ENCODE measurements at regions of chr10 and their contacts with region 1.

Region 1: GRCh38 chr10:6151087-6151977 is 51.4 kb upstream of the PFKFB3 start:
- DNase-seq: peak; percentile 84
- ATAC-seq: peak; percentile 84
- H3K4me3 ChIP-seq: peak overlapping the region; percentile 6 to 58 (median 26)
- H3K4me3 Mint-ChIP-seq: peak overlapping the region; percentile 85
- H3K27ac ChIP-seq: peak overlapping the region; percentile 40 to 78
- H3K27ac Mint-ChIP-seq: peak overlapping the region; percentile 87
- H3K4me1 ChIP-seq: peaks cover 24 to 34% of the 10 kb centered on the region in 2 donors
- H3K4me1 Mint-ChIP-seq: peaks cover 53% of the 10 kb centered on the region
- H3K27me3 ChIP-seq: no peaks in the 10 kb centered on the region
- H3K27me3 Mint-ChIP-seq: no peaks in the 10 kb centered on the region
- CTCF ChIP-seq: peak; percentile 71

Region 2: GRCh38 chr10:6074489-6075301 is 76.6 kb before region 1 on chr10:
- CTCF ChIA-PET with region 1: no interaction called
- POLR2A ChIA-PET with region 1: interaction called, 11 read pairs
- intact Hi-C with region 1: no loop called
- DNase-seq: no peak
- ATAC-seq: no peak
- H3K4me3 ChIP-seq: no peak overlapping the region
- H3K4me3 Mint-ChIP-seq: no peak overlapping the region
- H3K27ac ChIP-seq: no peak overlapping the region
- H3K27ac Mint-ChIP-seq: peak overlapping the region; percentile 61
- H3K4me1 ChIP-seq: peaks cover 35 to 38% of the 10 kb centered on the region in 2 donors
- H3K4me1 Mint-ChIP-seq: peaks cover 46% of the 10 kb centered on the region
- H3K27me3 ChIP-seq: no peaks in the 10 kb centered on the region
- H3K27me3 Mint-ChIP-seq: no peaks in the 10 kb centered on the region
- CTCF ChIP-seq: no peak

Region 3: GRCh38 chr10:6108603-6109443 is 42.5 kb before region 1 on chr10:
- CTCF ChIA-PET with region 1: interaction called, 33 read pairs
- POLR2A ChIA-PET with region 1: no interaction called
- intact Hi-C with region 1: loop called (anchors 1 kb)
- DNase-seq: peak; percentile 72
- ATAC-seq: peak; percentile 80
- H3K4me3 ChIP-seq: no peak overlapping the region
- H3K4me3 Mint-ChIP-seq: no peak overlapping the region
- H3K27ac ChIP-seq: no peak overlapping the region
- H3K27ac Mint-ChIP-seq: no peak overlapping the region
- H3K4me1 ChIP-seq: peaks cover 7 to 9% of the 10 kb centered on the region in 2 donors
- H3K4me1 Mint-ChIP-seq: peaks cover 12% of the 10 kb centered on the region
- H3K27me3 ChIP-seq: no peaks in the 10 kb centered on the region
- H3K27me3 Mint-ChIP-seq: no peaks in the 10 kb centered on the region
- CTCF ChIP-seq: peak; percentile 87

Region 4: DNA sequence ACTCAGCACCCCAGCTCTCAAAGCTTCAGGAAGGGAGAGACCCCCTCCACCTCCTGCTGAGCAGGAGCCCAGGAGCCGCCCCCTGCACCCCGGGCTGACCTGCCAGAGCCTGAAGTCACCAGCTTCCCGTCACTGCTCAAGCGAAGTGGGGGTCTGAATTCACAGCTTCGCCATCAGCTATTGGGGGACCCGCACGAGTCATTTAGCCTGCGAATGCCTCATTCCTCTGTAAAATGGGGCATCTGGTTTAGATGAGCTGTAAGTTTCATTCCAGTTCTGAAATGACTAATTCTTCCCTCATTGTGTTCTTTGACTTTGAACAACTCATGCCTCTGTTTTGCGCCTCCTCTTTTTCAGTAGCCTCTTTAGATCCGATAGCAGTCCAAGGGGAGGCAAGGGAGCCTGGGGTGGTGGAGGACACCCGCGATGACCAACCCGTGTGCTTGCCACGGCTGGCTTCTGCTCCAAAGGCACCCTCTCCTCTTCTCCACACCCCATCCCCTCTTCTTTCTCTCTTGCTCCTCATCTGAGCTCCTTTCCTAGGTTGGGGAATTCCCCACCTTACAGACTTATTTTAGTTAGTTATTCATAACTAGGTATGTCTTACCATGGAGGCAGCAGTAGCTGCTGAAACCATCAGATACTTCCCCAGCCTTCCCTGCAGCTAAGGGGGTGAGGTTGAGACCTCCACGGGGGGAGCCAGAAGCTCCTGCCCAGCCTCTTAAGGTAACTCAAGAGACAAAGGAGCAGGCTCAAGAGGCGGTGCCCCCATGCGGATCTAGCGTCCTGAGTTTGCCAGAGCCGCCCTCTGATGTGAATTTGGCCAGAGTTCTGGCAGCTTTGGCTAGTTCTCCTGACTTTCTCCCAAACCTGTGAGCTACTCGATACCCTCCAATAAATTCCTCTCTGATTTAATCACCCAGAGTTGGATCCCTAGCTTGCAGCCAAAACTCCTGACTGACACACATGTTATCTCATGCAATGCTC is 14.8 kb before region 1 on chr10:
- CTCF ChIA-PET with region 1: interaction called, 27 read pairs
- POLR2A ChIA-PET with region 1: no interaction called
- intact Hi-C with region 1: no loop called
- DNase-seq: no peak
- ATAC-seq: no peak
- H3K4me3 ChIP-seq: no peak overlapping the region
- H3K4me3 Mint-ChIP-seq: no peak overlapping the region
- H3K27ac ChIP-seq: no peak overlapping the region
- H3K27ac Mint-ChIP-seq: no peak overlapping the region
- H3K4me1 ChIP-seq: peaks cover 10 to 17% of the 10 kb centered on the region in 2 donors
- H3K4me1 Mint-ChIP-seq: peaks cover 21% of the 10 kb centered on the region
- H3K27me3 ChIP-seq: peaks cover 0 to 27% (median 11%) of the 10 kb centered on the region in 4 experiments
- H3K27me3 Mint-ChIP-seq: peaks cover 29% of the 10 kb centered on the region
- CTCF ChIP-seq: no peak

Region 5: DNA sequence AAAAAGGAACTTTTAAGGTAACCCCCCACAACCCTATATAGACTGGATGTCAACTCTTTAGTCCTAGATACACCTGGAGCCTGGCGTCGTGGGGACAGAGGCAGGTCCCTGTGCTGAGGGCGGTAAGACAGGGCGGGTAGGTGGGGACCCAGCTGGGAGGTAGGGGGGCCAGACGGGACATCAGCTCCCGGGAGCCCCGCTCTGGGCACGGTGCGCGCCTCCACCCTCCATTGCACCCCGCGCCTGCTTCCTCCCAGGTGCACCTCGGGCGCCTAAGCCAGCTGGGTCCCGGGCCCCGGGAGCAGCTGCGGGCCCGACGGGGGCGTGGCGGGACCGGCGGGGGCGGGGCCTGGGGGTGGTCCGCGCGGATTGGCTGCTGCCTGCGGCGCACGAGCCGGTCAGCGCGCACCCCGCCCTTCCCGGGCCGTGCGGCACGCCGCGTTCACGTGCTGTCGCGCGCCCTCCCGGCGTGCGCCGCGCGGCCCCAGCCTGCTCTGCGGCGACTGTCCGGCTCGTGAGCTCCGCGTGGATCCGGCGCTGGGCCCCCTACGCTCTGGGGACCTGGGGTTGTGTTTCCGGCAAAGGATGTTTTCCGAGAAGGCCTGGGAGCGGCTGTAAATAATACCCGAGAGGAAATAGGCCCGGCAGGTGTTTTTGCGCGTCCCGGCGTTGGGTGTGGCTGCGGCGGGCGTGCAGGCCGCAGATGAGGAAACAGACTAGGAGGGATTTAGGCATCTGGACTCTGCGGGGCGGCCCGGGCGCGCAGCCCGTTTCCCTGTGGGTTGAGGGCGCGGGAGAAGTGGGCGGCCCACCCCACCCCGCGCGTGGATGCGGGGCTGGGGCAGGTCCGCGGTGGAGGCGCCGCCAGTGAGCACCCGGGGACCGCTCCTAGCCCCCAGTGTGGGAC is 12.3 kb after region 1 on chr10:
- CTCF ChIA-PET with region 1: interaction called, 17 read pairs
- POLR2A ChIA-PET with region 1: interaction called, 6 read pairs
- intact Hi-C with region 1: no loop called
- DNase-seq: peak; percentile 95
- ATAC-seq: peak; percentile 96
- H3K4me3 ChIP-seq: peak overlapping the region in 4 of 5 experiments; percentile 69 to 84 (median 72)
- H3K4me3 Mint-ChIP-seq: peak overlapping the region; percentile 97
- H3K27ac ChIP-seq: peak overlapping the region; percentile 89 to 96
- H3K27ac Mint-ChIP-seq: peak overlapping the region; percentile 98
- H3K4me1 ChIP-seq: peaks cover 16 to 19% of the 10 kb centered on the region in 2 donors
- H3K4me1 Mint-ChIP-seq: peaks cover 39% of the 10 kb centered on the region
- H3K27me3 ChIP-seq: no peaks in the 10 kb centered on the region
- H3K27me3 Mint-ChIP-seq: no peaks in the 10 kb centered on the region
- CTCF ChIP-seq: no peak

Region 6: DNA sequence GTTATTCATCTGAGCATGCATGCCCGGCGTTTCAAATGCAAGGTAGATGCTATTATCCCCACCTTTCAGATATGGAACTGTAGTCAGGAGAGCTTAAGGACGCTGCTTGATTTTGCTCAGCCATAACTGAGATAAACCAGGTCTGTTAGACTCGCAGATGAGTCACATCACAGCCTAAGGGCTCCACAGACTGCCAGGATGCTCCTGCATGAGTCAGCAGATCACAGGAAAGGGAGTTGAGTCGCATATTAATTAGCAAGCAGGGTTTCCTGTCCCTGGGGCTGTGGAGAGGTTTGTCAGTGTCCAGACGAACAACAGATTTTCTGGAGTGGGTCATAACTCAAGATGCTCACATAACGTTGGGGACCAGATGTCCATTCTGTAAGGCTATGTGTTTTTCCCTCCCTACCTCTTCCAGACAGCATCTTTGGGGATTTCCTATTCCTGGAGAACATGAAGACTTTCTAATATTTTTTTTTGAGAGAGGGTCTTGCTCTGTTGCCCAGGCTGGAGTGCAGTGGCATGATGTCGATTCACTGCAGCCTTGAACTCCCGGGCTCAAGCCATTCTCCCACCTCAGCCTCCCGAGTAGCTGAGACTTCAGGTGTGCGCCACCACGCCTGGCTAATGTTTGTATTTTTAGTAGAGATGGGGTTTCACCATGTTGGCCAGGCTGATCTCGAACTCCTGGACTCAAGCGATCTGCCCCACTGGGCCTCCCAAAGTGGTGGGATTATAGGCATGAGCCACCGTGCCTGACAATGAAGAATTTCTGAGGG is 88.1 kb after region 1 on chr10:
- CTCF ChIA-PET with region 1: no interaction called
- POLR2A ChIA-PET with region 1: no interaction called
- intact Hi-C with region 1: no loop called
- DNase-seq: no peak
- ATAC-seq: no peak
- H3K4me3 ChIP-seq: no peak overlapping the region
- H3K4me3 Mint-ChIP-seq: no peak overlapping the region
- H3K27ac ChIP-seq: no peak overlapping the region
- H3K27ac Mint-ChIP-seq: no peak overlapping the region
- H3K4me1 ChIP-seq: no peaks in the 10 kb centered on the region
- H3K4me1 Mint-ChIP-seq: peaks cover 8% of the 10 kb centered on the region
- H3K27me3 ChIP-seq: no peaks in the 10 kb centered on the region
- H3K27me3 Mint-ChIP-seq: no peaks in the 10 kb centered on the region
- CTCF ChIP-seq: no peak